ENCODE measurements at regions of chr19 and their contacts with region 1.

Region 1: GRCh38 chr19:53431399-53432087 is at the start of gene ZNF761:
- DNase-seq: peak; percentile 97
- H3K4me3 ChIP-seq: peak within 1 kb of the TSS; percentile 60 to 71 (median 64)
- H3K27ac ChIP-seq: peak within 1 kb of the TSS; percentile 63 to 79 (median 72)
- H3K4me1 ChIP-seq: peaks cover 0 to 10% (median 7%) of the 10 kb centered on the region in 4 donors
- H3K27me3 ChIP-seq: no peaks in the 10 kb centered on the region
- CTCF ChIP-seq: peak; percentile 33 to 45 (median 40)
- EP300 ChIP-seq: no peak
- POLR2A ChIP-seq: peak; percentile 45 to 72
- total RNA-seq, gene ZNF761: 6.5 to 12.5 (median 11.0) TPM

Region 2: DNA sequence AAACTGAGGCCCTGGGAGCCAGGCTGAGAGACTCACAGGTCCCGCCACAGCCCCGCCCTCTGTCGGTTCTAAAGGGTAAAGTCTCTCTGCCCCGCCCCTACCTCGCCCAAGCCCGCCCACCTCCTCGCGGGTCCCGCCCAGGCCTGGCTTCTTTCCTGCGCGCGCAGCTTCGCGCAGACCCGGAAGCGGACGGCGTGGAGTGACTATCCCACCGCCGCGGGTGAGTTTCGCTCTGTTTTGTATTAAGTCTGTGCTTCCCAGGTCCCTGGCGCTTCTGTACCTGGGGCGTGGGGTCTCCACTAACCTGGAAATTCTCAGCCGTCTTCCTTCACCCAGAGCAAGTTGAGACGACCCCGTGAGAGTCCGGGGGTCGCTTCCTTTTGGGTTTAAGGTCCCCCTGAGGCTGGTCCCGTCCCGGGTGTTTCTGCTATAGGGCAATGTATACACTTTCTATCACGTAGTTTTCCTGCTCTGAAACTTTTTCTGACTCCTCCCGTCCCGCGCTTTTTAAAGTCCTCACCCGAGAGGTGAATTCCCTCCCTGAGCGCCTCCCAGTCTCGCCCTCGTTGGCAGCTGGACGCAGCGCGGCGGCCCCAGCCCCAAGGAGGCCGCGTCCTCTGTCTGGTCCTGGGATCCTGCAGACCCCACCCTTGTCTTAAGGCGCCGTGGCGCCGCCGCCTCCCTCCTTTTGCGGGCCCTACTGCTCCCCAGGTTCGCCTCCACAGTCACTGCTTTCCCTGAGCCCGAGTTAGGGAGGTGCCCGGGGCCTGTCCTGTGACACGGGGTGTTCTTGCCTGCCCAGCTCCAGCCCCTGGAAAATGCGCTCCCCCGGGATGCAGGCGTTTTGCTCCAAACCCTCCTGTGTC is 36.3 kb before region 1 on chr19 and contains the start of gene ZNF765:
- intact Hi-C with region 1: no loop called
- DNase-seq: peak; percentile 98
- H3K4me3 ChIP-seq: peak within 1 kb of the TSS; percentile 73 to 89 (median 78)
- H3K27ac ChIP-seq: peak within 1 kb of the TSS; percentile 79 to 92 (median 86)
- H3K4me1 ChIP-seq: peaks cover 0 to 22% (median 21%) of the 10 kb centered on the region in 4 donors
- H3K27me3 ChIP-seq: no peaks in the 10 kb centered on the region
- CTCF ChIP-seq: peak in 3 of 4 experiments; percentile 47 to 54 (median 52)
- EP300 ChIP-seq: no peak
- POLR2A ChIP-seq: peak; percentile 62 to 67
- total RNA-seq, gene ZNF765: 6.2 to 13.0 (median 11.7) TPM

Region 3: GRCh38 chr19:53467485-53468262 is 36.1 kb after region 1 on chr19 and contains the start of gene ZNF813:
- intact Hi-C with region 1: loop called (anchors 5 kb)
- DNase-seq: peak; percentile 97
- H3K4me3 ChIP-seq: peak within 1 kb of the TSS; percentile 71 to 80 (median 74)
- H3K27ac ChIP-seq: peak within 1 kb of the TSS; percentile 74 to 79 (median 75)
- H3K4me1 ChIP-seq: peaks cover 0 to 15% (median 13%) of the 10 kb centered on the region in 4 donors
- H3K27me3 ChIP-seq: peaks cover 0 to 27% (median 0%) of the 10 kb centered on the region in 3 donors
- CTCF ChIP-seq: no peak
- EP300 ChIP-seq: no peak
- POLR2A ChIP-seq: no peak
- total RNA-seq, gene ZNF813: 2.9 to 4.2 (median 3.4) TPM

Region 4: DNA sequence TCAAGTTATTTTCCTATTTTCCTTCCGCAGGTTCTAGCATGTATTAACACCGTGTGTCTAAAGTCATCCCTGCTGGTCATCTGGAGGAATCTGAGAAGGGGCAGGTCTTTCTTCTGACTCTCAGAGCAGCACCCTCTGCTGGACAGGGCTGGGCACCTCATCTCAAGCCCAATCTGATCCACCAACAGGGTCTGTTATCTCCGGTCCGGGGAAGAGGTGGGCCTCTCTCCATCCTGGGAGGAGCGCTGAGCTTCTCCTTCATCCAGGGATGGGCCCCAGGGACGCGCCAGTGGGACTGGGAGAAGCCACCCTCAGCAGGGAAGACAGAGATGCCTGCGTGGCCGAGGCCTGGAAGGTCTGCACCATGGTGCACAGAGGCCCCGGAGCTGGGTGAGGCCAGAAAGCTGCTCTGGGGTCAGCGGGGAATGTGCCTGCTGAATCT is 80.4 kb after region 1 on chr19:
- intact Hi-C with region 1: loop called (anchors 2 kb)
- DNase-seq: peak; percentile 74
- H3K4me3 ChIP-seq: no peak overlapping the region
- H3K27ac ChIP-seq: no peak overlapping the region
- H3K4me1 ChIP-seq: no peaks in the 10 kb centered on the region
- H3K27me3 ChIP-seq: no peaks in the 10 kb centered on the region
- CTCF ChIP-seq: peak in 3 of 4 experiments; percentile 63 to 73 (median 64)
- EP300 ChIP-seq: no peak
- POLR2A ChIP-seq: no peak

Region 5: GRCh38 chr19:53642381-53643081 is 211.0 kb after region 1 on chr19:
- intact Hi-C with region 1: no loop called
- DNase-seq: no peak
- H3K4me3 ChIP-seq: no peak overlapping the region
- H3K27ac ChIP-seq: no peak overlapping the region
- H3K4me1 ChIP-seq: no peaks in the 10 kb centered on the region
- H3K27me3 ChIP-seq: peaks cover 0 to 2% (median 0%) of the 10 kb centered on the region in 3 donors
- CTCF ChIP-seq: no peak
- EP300 ChIP-seq: no peak
- POLR2A ChIP-seq: no peak

Measured in sigmoid colon (tissue), 7 donors.